ENCODE measurements at regions of chr1 and their contacts with region 1.

Region 1: DNA sequence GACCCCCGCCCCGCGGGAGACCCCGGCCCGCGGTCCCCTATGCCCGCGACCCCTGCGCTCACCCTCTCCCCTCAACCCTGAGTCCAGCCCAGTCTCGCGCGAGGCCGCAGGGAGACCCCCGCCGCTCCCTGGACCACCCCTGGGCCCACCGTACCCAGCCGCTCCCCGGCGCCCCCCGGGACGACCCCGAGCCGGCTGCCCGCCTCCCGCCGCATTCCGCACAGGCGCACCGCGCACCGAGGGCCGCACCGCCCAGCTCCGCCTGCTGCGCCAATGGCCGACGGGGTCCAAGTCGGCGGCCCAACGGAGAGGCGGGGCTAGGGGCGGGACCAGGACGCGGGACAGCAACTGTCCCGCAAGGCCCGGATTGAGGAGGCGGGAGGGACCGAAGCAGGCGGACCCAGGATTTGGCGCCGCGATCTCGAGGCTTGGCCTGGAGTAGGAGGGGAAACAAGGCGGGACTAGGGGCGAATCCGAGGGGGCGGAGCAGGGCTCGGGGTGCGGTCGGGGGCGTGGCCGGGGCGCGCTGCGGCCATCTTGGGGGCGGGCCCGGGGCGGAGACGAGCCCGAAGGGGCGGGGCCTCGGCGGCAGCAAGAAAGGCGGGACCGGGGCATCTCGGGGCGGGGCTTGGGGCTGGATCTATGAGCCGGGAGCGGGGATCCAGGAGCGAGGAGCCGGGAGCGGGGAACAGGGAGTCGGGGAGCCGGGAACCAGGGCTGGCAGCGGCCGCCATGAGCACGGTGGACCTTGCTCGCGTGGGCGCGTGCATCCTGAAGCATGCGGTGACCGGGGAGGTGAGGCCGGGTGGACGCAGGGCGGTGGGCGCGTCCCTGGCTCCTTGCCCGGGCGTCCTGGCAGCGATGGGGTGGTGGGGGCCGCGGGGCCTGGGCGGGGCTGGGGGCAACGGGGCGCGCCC is at the start of gene PRXL2B:
- DNase-seq: peak; percentile 95 to 98 (median 95)
- H3K4me3 ChIP-seq: peak within 1 kb of the TSS; percentile 52 to 72
- H3K4me3 Mint-ChIP-seq: peak within 1 kb of the TSS; percentile 87 to 98 (median 92)
- H3K27ac ChIP-seq: peak within 1 kb of the TSS; percentile 90
- H3K27ac Mint-ChIP-seq: peak within 1 kb of the TSS; percentile 95 to 99 (median 97)
- H3K4me1 ChIP-seq: peaks cover 42% of the 10 kb centered on the region
- H3K4me1 Mint-ChIP-seq: peaks cover 22 to 56% (median 36%) of the 10 kb centered on the region in 4 donors
- H3K27me3 ChIP-seq: no peaks in the 10 kb centered on the region
- H3K27me3 Mint-ChIP-seq: no peaks in the 10 kb centered on the region
- total RNA-seq, gene PRXL2B: 26.5 to 27.2 TPM

Region 2: GRCh38 chr1:2525920-2526823 is 60.2 kb before region 1 on chr1 and contains the start of gene PANK4:
- CTCF ChIA-PET with region 1: interaction called, 21 read pairs
- POLR2A ChIA-PET with region 1: interaction called, 79 read pairs
- intact Hi-C with region 1: loop called (anchors 1 kb)
- DNase-seq: peak; percentile 86 to 90 (median 89)
- H3K4me3 ChIP-seq: peak within 1 kb of the TSS; percentile 31 to 96
- H3K4me3 Mint-ChIP-seq: peak within 1 kb of the TSS; percentile 89 to 97 (median 95)
- H3K27ac ChIP-seq: peak within 1 kb of the TSS; percentile 86
- H3K27ac Mint-ChIP-seq: peak within 1 kb of the TSS; percentile 86 to 98 (median 97)
- H3K4me1 ChIP-seq: peaks cover 64% of the 10 kb centered on the region
- H3K4me1 Mint-ChIP-seq: peaks cover 27 to 63% (median 47%) of the 10 kb centered on the region in 4 donors
- H3K27me3 ChIP-seq: peaks cover 9% of the 10 kb centered on the region
- H3K27me3 Mint-ChIP-seq: peaks cover 5 to 11% of the 10 kb centered on the region in 2 donors
- total RNA-seq, gene PANK4: 88.9 to 93.7 TPM

Region 3: DNA sequence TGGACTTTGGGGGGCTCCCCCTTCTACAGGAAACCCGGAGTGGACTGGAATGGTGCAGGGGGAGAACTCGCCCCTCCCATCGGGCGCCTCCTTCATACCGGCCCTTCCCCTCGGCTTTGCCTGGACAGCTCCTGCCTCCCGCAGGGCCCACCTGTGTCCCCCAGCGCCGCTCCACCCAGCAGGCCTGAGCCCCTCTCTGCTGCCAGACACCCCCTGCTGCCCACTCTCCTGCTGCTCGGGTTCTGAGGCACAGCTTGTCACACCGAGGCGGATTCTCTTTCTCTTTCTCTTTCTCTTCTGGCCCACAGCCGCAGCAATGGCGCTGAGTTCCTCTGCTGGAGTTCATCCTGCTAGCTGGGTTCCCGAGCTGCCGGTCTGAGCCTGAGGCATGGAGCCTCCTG is 30.1 kb before region 1 on chr1 and contains the start of gene TNFRSF14:
- CTCF ChIA-PET with region 1: interaction called, 37 read pairs
- POLR2A ChIA-PET with region 1: interaction called, 180 read pairs
- intact Hi-C with region 1: loop called (anchors 1 kb)
- DNase-seq: peak; percentile 77 to 88 (median 78)
- H3K4me3 ChIP-seq: peak within 1 kb of the TSS; percentile 95 to 98
- H3K4me3 Mint-ChIP-seq: peak within 1 kb of the TSS; percentile 92 to 99 (median 96)
- H3K27ac ChIP-seq: peak within 1 kb of the TSS; percentile 98
- H3K27ac Mint-ChIP-seq: peak within 1 kb of the TSS; percentile 95 to 100 (median 98)
- H3K4me1 ChIP-seq: peaks cover 43% of the 10 kb centered on the region
- H3K4me1 Mint-ChIP-seq: peaks cover 9 to 50% (median 30%) of the 10 kb centered on the region in 4 donors
- H3K27me3 ChIP-seq: no peaks in the 10 kb centered on the region
- H3K27me3 Mint-ChIP-seq: no peaks in the 10 kb centered on the region
- total RNA-seq, gene TNFRSF14: 170 to 173 TPM

Region 4: GRCh38 chr1:2561898-2562545 is 24.4 kb before region 1 on chr1:
- CTCF ChIA-PET with region 1: interaction called, 37 read pairs
- POLR2A ChIA-PET with region 1: interaction called, 180 read pairs
- intact Hi-C with region 1: no loop called
- DNase-seq: no peak
- H3K4me3 ChIP-seq: no peak overlapping the region
- H3K4me3 Mint-ChIP-seq: no peak overlapping the region
- H3K27ac ChIP-seq: peak overlapping the region; percentile 15
- H3K27ac Mint-ChIP-seq: peak overlapping the region in 2 of 7 donors; percentile 35 to 40
- H3K4me1 ChIP-seq: peaks cover 23% of the 10 kb centered on the region
- H3K4me1 Mint-ChIP-seq: peaks cover 0 to 23% (median 10%) of the 10 kb centered on the region in 4 donors
- H3K27me3 ChIP-seq: no peaks in the 10 kb centered on the region
- H3K27me3 Mint-ChIP-seq: no peaks in the 10 kb centered on the region

Region 5: DNA sequence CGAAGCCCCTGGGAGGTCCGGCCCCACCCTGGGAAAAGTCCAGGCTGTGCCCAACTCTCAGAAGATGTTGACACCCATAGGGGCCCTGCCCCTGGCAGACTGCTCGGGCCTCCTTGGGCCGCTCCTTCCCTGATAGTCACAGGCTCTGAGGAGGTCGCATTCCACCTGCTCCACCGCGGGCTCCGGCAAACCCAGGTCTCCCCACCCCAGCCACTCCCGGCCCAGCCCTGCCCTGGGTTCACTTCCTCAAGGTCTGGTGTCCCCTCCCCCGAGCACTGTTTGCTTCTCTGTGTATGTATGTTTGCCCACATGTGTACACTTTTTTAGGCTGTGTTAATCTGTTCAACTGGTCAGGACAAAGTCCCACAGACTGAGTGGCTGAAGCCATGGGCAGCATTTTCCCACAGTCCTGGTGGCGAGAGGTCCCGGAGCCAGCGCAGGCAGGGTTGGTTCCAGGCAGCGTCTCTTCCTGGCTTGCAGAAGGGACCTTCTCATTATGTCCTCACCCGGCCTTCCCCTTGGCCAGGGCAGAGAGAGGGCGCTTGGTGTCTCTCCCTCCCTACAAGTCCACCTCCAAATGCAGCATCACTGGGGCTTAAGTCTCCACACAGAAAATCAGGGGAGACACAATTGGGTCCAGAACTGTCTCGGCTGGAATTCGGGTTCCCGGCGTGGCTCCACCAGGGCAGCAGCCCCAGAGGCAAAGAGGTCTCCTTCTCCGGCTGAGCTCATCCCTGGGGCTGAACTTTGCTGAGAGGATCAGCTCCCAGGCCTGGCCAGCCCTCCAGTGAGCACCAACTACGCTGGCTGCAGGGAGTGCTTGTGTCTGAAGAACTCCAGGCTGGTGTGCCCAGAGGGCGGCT is 10.4 kb before region 1 on chr1:
- CTCF ChIA-PET with region 1: interaction called, 4 read pairs
- POLR2A ChIA-PET with region 1: interaction called, 30 read pairs
- intact Hi-C with region 1: loop called (anchors 1 kb)
- DNase-seq: peak in 1 of 5 donors; percentile 28
- H3K4me3 ChIP-seq: no peak overlapping the region
- H3K4me3 Mint-ChIP-seq: peak overlapping the region in 3 of 8 donors; percentile 16 to 59 (median 30)
- H3K27ac ChIP-seq: peak overlapping the region; percentile 99
- H3K27ac Mint-ChIP-seq: peak overlapping the region in 6 of 7 donors; percentile 13 to 98 (median 70)
- H3K4me1 ChIP-seq: peaks cover 47% of the 10 kb centered on the region
- H3K4me1 Mint-ChIP-seq: peaks cover 16 to 59% (median 32%) of the 10 kb centered on the region in 4 donors
- H3K27me3 ChIP-seq: no peaks in the 10 kb centered on the region
- H3K27me3 Mint-ChIP-seq: no peaks in the 10 kb centered on the region

Region 6: DNA sequence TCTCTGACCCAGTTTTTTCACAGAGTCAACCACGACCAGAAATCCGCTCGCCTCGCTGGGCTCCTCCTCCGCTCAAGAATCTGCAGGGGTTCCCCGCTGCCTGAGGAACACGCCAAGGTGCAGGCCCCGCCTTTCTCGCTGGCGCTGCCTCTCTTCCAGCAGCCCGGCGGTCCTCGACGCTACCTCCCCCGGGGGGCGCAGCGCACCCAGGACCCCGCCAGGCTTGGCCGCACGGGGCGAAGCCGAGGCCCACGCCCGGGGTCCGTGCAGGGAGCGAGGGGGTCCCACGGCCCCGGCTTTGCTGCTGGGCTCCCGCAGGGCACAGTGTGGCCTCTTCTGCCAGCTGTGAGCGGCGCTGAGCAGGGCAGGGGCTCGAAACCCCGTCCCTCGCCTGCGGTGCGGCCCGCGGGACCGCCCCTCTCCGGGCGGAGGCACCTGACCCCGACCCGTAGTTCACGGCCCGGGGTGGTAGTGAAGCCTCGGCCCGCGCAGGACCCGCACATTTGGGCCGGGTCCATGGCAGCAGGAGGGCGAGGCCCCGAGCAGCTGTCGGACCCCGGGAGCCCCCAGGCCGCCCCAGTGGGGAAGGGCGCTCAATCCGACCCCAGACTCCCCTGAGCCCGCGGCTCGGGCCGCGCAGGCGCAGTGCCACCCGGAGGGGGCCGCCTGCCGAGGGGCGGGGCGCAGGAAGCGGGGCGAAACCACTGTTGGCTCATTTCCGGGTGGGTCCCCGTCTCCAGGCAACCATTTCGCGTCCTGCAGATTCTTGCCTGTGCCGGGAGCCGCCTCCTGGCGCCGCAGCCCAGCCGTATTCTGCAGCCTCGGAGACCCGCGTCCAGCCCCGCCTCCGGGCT is 56.4 kb after region 1 on chr1:
- CTCF ChIA-PET with region 1: no interaction called
- POLR2A ChIA-PET with region 1: interaction called, 12 read pairs
- intact Hi-C with region 1: loop called (anchors 1 kb)
- DNase-seq: peak; percentile 95 to 96 (median 95)
- H3K4me3 ChIP-seq: peak overlapping the region; percentile 69 to 83
- H3K4me3 Mint-ChIP-seq: peak overlapping the region; percentile 85 to 94 (median 88)
- H3K27ac ChIP-seq: peak overlapping the region; percentile 99
- H3K27ac Mint-ChIP-seq: peak overlapping the region; percentile 85 to 99 (median 96)
- H3K4me1 ChIP-seq: peaks cover 16% of the 10 kb centered on the region
- H3K4me1 Mint-ChIP-seq: peaks cover 2 to 21% (median 10%) of the 10 kb centered on the region in 4 donors
- H3K27me3 ChIP-seq: no peaks in the 10 kb centered on the region
- H3K27me3 Mint-ChIP-seq: no peaks in the 10 kb centered on the region

Measured in CD4-positive, alpha-beta memory T cell (primary cell).